CD4-positive, alpha-beta T cell (primary cell): ENCODE measurements at regions of chr4 and their contacts with region 1.

Region 1: GRCh38 chr4:70704331-70705145 is 16.2 kb downstream of the UTP3 start:
- DNase-seq: peak in 13 of 14 experiments; percentile 26 to 82 (median 51)
- ATAC-seq: peak; percentile 41
- H3K4me3 ChIP-seq: peak overlapping the region; percentile 66
- H3K4me3 Mint-ChIP-seq: peak overlapping the region; percentile 94
- H3K27ac ChIP-seq: peak overlapping the region; percentile 61 to 71
- H3K27ac Mint-ChIP-seq: peak overlapping the region; percentile 91
- H3K4me1 ChIP-seq: peaks cover 24% of the 10 kb centered on the region
- H3K4me1 Mint-ChIP-seq: peaks cover 39% of the 10 kb centered on the region
- H3K27me3 ChIP-seq: no peaks in the 10 kb centered on the region
- H3K27me3 Mint-ChIP-seq: no peaks in the 10 kb centered on the region
- CTCF ChIP-seq: peak; percentile 27

Region 2: DNA sequence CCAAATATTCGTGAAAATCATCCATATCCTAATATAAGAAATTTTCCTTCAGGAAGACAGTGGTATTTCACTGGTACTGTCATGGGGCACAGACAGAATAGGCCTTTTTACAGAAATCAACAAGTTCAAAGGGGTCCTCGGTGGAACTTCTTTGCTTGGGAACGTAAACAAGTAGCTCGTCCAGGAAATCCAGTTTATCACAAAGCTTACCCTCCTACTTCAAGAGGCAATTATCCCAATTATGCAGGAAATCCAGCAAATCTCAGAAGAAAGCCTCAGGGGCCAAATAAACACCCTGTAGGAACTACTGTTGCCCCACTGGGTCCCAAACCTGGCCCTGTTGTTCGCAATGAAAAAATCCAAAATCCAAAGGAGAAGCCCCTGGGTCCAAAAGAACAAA is 62.2 kb before region 1 on chr4:
- CTCF ChIA-PET with region 1: no interaction called
- POLR2A ChIA-PET with region 1: no interaction called
- intact Hi-C with region 1: no loop called
- DNase-seq: no peak
- ATAC-seq: no peak
- H3K4me3 ChIP-seq: no peak overlapping the region
- H3K4me3 Mint-ChIP-seq: no peak overlapping the region
- H3K27ac ChIP-seq: no peak overlapping the region
- H3K27ac Mint-ChIP-seq: no peak overlapping the region
- H3K4me1 ChIP-seq: no peaks in the 10 kb centered on the region
- H3K4me1 Mint-ChIP-seq: no peaks in the 10 kb centered on the region
- H3K27me3 ChIP-seq: no peaks in the 10 kb centered on the region
- H3K27me3 Mint-ChIP-seq: no peaks in the 10 kb centered on the region
- CTCF ChIP-seq: no peak

Region 3: DNA sequence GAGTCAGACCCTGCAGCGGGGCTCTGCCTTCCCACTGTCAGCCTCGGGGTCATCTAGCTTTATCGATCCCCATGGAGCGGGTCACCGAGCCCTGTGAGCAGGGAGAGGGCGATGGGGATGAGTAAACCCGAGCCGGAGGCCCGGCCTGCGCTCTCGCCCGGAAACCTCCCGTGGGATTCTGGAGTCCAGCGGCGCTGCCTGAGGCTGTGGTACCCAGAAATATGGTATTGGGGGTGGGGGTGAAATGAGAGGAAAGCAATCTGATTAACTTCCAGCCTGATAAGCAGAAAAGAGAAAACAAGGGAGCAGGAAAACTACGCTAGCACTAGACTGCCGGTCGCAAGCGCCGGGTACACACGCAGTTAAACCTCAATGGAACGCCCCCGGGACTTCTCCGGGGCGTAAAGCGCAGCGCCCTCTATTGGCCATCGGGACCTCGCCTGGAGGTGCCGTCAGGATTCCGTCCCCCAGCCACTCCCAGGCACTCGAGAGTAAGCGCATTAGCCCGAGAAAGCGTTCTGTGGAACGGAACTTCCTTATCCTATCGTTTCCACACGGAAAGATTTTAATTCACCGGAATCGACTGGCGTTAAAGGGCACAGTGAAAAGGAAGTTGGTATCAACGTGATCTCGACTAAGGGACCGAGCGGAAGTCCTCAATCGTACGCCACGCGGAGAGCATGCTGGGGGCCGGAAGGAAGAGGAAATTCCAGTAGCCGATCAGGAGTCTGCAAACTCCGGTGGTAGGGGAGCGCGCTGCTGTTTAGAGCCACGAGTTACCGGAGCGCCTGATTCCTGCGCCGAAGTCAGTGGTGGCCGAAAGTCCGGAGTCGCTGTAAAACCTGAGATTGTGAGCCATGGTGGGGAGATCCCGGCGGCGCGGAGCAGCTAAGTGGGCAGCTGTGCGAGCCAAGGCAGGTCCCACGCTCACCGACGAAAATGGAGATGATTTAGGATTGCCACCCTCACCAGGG is 16.4 kb before region 1 on chr4 and contains the start of gene UTP3:
- CTCF ChIA-PET with region 1: interaction called, 35 read pairs
- POLR2A ChIA-PET with region 1: interaction called, 166 read pairs
- intact Hi-C with region 1: loop called (anchors 1 kb)
- DNase-seq: peak; percentile 87 to 98 (median 90)
- ATAC-seq: peak; percentile 87
- H3K4me3 ChIP-seq: peak within 1 kb of the TSS; percentile 74
- H3K4me3 Mint-ChIP-seq: peak within 1 kb of the TSS; percentile 91
- H3K27ac ChIP-seq: peak within 1 kb of the TSS; percentile 94 to 97
- H3K27ac Mint-ChIP-seq: peak within 1 kb of the TSS; percentile 99
- H3K4me1 ChIP-seq: peaks cover 26% of the 10 kb centered on the region
- H3K4me1 Mint-ChIP-seq: peaks cover 45% of the 10 kb centered on the region
- H3K27me3 ChIP-seq: no peaks in the 10 kb centered on the region
- H3K27me3 Mint-ChIP-seq: no peaks in the 10 kb centered on the region
- CTCF ChIP-seq: peak; percentile 98
- total RNA-seq, gene UTP3: 19.2 to 20.5 TPM

Region 4: DNA sequence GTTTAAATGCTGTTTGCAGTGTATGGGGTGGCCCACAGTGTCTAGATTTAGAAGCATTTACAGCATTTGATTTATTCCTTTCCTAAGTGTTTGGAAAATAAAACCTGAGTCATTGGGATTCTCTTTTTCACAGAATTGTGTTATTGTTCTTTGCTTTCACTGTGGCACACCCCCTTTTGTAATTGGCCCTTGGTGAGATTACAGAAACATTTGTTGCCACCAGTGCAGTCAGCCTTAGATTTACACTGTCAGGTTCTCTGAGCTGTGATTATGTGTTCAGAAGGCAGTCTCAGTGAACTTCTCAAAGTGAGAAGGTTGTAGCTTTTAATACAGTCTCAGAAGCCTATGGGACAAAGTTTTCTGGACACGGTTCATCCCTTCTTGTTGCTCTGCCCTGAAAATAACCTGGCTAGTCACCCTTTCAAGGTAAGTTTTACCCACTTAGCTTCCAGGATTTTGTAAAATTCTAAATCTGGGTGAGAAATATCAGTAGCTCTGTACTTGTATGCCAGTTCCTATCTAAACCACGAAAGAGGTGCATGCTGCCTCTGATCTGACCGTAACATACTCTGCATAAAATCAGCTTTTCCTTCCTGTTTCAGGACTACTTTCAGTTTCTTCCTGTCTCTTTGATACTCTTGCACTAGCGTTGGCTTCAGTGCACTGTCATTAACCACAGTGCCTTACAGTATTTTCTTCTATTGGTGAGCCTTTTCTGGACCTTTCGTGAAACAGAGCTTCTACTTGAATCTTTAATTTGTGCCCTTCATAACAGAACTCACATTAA is 29.8 kb after region 1 on chr4:
- CTCF ChIA-PET with region 1: interaction called, 16 read pairs
- POLR2A ChIA-PET with region 1: interaction called, 127 read pairs
- intact Hi-C with region 1: loop called in 1 of 2 experiments (anchors 2 kb)
- DNase-seq: peak in 8 of 14 experiments; percentile 4 to 86 (median 34)
- ATAC-seq: peak; percentile 86
- H3K4me3 ChIP-seq: peak overlapping the region; percentile 44
- H3K4me3 Mint-ChIP-seq: peak overlapping the region; percentile 72
- H3K27ac ChIP-seq: peak overlapping the region; percentile 37 to 79
- H3K27ac Mint-ChIP-seq: peak overlapping the region; percentile 80
- H3K4me1 ChIP-seq: peaks cover 35% of the 10 kb centered on the region
- H3K4me1 Mint-ChIP-seq: peaks cover 57% of the 10 kb centered on the region
- H3K27me3 ChIP-seq: no peaks in the 10 kb centered on the region
- H3K27me3 Mint-ChIP-seq: no peaks in the 10 kb centered on the region
- CTCF ChIP-seq: no peak

Region 5: DNA sequence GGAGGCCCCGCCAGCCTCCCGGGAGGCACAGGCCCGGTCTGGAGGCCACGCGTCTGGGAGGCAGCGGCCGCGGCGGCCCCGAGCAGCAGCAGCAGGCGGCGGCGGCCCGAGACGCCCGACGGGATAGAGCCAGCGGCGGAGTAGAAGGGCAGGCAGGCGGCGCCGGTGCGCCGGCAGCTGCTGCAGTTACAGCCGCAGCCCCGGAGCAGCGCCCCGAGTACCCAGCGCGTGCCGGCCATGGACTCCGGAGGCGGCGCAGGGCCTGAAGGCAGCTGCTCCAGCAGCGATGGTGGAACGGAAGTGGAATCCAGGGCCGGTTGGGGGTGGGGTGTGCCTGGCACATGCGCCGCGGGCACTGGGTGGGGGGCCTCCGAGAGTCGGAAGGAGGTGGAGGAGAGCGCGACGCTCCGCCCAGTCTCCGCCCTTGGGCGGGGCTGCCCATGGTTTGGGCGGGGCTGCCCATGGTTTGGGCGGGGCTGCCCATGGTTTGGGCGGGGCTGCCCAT is 135.1 kb after region 1 on chr4 and contains the start of gene GRSF1:
- CTCF ChIA-PET with region 1: interaction called, 6 read pairs
- POLR2A ChIA-PET with region 1: interaction called, 48 read pairs
- intact Hi-C with region 1: loop called in 1 of 2 experiments (anchors 5 kb)
- DNase-seq: peak; percentile 92 to 97 (median 94)
- ATAC-seq: peak; percentile 91
- H3K4me3 ChIP-seq: peak within 1 kb of the TSS; percentile 73
- H3K4me3 Mint-ChIP-seq: peak within 1 kb of the TSS; percentile 100
- H3K27ac ChIP-seq: peak within 1 kb of the TSS; percentile 69 to 73
- H3K27ac Mint-ChIP-seq: peak within 1 kb of the TSS; percentile 93
- H3K4me1 ChIP-seq: peaks cover 35% of the 10 kb centered on the region
- H3K4me1 Mint-ChIP-seq: peaks cover 34% of the 10 kb centered on the region
- H3K27me3 ChIP-seq: no peaks in the 10 kb centered on the region
- H3K27me3 Mint-ChIP-seq: no peaks in the 10 kb centered on the region
- CTCF ChIP-seq: no peak
- total RNA-seq, gene GRSF1: 32.7 to 34.1 TPM

Region 6: GRCh38 chr4:70993181-70994068 is 288.9 kb after region 1 on chr4 and contains the start of gene DCK:
- CTCF ChIA-PET with region 1: no interaction called
- POLR2A ChIA-PET with region 1: interaction called, 14 read pairs
- intact Hi-C with region 1: no loop called
- DNase-seq: peak; percentile 64 to 93 (median 79)
- ATAC-seq: peak; percentile 77
- H3K4me3 ChIP-seq: peak within 1 kb of the TSS; percentile 95
- H3K4me3 Mint-ChIP-seq: peak within 1 kb of the TSS; percentile 93
- H3K27ac ChIP-seq: peak within 1 kb of the TSS; percentile 82
- H3K27ac Mint-ChIP-seq: peak within 1 kb of the TSS; percentile 85
- H3K4me1 ChIP-seq: peaks cover 20% of the 10 kb centered on the region
- H3K4me1 Mint-ChIP-seq: peaks cover 59% of the 10 kb centered on the region
- H3K27me3 ChIP-seq: no peaks in the 10 kb centered on the region
- H3K27me3 Mint-ChIP-seq: no peaks in the 10 kb centered on the region
- CTCF ChIP-seq: no peak
- total RNA-seq, gene DCK: 12.8 to 13.9 TPM